ENCODE measurements at regions of chr15 and their contacts with region 1.

Region 1: GRCh38 chr15:81274931-81275707 is 48.8 kb downstream of the STARD5 start:
- DNase-seq: peak; percentile 62 to 89 (median 78)
- ATAC-seq: peak; percentile 93 to 95
- H3K4me3 Mint-ChIP-seq: peak overlapping the region; percentile 37 to 81 (median 62)
- H3K27ac Mint-ChIP-seq: peak overlapping the region; percentile 79 to 93 (median 86)
- H3K4me1 Mint-ChIP-seq: peaks cover 23 to 50% (median 41%) of the 10 kb centered on the region in 4 donors
- H3K27me3 Mint-ChIP-seq: no peaks in the 10 kb centered on the region

Region 2: DNA sequence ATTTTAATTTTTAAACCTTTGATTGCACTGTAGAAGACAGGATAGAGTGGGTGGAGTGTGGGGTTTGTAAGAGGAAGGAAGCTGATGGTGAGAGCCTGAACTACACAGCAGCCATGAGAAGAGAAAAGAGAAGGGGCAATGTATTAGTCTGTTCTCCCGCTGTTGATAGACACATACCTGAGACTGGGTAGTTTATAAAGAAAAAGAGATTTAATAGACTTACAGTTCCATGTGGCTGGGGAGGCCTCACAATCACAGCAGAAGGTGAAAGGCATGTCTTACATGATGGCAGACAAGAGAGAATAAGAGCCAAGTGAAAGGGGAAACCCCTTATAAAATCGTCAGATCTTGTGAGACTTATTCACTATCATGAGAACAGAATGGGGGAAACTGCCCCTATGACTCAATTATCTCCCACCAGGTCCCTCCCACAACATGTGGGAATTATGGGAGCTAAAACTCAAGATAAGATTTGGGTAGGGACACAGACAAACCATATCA is 11.6 kb after region 1 on chr15:
- POLR2A ChIA-PET with region 1: interaction called, 491 read pairs
- DNase-seq: peak in 5 of 10 donors; percentile 33 to 77 (median 67)
- ATAC-seq: peak; percentile 91 to 97
- H3K4me3 Mint-ChIP-seq: peak overlapping the region; percentile 64 to 87 (median 78)
- H3K27ac Mint-ChIP-seq: peak overlapping the region; percentile 93 to 99 (median 97)
- H3K4me1 Mint-ChIP-seq: peaks cover 57 to 89% (median 82%) of the 10 kb centered on the region in 4 donors
- H3K27me3 Mint-ChIP-seq: no peaks in the 10 kb centered on the region

Region 3: DNA sequence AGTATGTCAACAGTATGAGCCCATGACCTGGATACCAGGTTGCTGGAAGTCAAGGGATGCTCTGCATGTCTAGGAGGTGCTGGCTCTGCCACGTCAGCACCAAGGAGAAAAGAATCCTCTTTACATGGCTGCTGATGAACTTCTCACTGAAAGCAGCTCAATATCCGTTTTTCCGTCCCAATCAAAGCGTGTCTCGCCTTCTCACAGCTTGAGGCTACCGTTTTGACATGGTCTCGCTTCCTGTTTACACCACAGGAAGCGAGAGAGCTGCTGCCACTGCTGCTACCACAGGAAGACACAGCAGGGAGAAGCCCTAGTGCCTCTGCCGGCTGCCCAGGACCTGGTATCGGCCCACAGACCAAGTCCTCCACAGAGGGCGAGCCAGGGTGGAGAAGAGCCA is 21.6 kb after region 1 on chr15:
- POLR2A ChIA-PET with region 1: interaction called, 491 read pairs
- DNase-seq: peak; percentile 39 to 88 (median 74)
- ATAC-seq: peak; percentile 58 to 60
- H3K4me3 Mint-ChIP-seq: peak overlapping the region; percentile 96 to 100 (median 100)
- H3K27ac Mint-ChIP-seq: peak overlapping the region; percentile 92 to 100 (median 98)
- H3K4me1 Mint-ChIP-seq: peaks cover 47 to 83% (median 64%) of the 10 kb centered on the region in 4 donors
- H3K27me3 Mint-ChIP-seq: no peaks in the 10 kb centered on the region